Heart right ventricle (tissue), 16 donors: ENCODE measurements at regions of chr11 and their contacts with region 1.

Region 1: GRCh38 chr11:72430741-72431570 is 3.4 kb downstream of the CLPB start:
- DNase-seq: no peak
- ATAC-seq: peak in 4 of 8 donors; percentile 12 to 37 (median 33)
- H3K4me3 ChIP-seq: no peak overlapping the region
- H3K27ac ChIP-seq: no peak overlapping the region
- H3K4me1 ChIP-seq: peaks cover 0 to 41% (median 21%) of the 10 kb centered on the region in 9 donors
- H3K27me3 ChIP-seq: no peaks in the 10 kb centered on the region
- CTCF ChIP-seq: peak; percentile 39 to 83 (median 75)

Region 2: DNA sequence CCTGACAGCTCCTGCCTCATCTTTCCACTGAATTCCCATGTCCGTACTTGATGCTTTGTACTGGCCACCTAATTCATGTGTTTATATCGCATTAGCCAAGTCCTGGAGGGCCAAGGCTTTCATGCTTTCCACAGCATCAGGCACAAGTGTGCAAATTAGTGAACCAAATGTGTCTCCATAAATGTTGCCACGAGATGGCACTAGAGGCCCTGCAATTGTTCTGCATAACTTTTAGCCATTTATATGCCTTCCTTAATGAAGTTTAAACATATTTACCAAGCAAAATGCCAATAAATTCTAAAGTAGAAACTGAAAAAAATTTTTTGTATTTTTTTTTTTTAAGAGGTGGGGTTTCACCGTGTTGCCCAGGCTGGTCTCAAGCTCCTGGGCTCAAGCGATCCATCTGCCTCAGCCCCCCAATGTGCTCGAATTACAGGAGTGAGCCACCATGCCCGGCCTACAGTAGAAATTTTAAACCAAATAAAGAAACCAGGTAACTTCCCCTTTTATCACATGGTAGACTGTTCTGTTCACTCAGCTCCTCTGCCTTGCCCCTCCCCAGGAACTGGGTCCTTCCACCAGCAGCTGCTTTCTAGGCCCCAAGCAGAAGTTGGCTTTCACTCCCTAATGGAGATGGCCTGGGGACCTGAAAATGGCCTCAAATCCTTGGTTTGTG is 453.1 kb before region 1 on chr11:
- intact Hi-C with region 1: loop called in 4 of 10 experiments (anchors 5 to 10 kb)
- DNase-seq: peak in 1 of 2 donors; percentile 45
- ATAC-seq: peak in 6 of 8 donors; percentile 35 to 81 (median 68)
- H3K4me3 ChIP-seq: no peak overlapping the region
- H3K27ac ChIP-seq: peak overlapping the region in 1 of 10 donors; percentile 41
- H3K4me1 ChIP-seq: peaks cover 0 to 6% (median 0%) of the 10 kb centered on the region in 9 donors
- H3K27me3 ChIP-seq: no peaks in the 10 kb centered on the region
- CTCF ChIP-seq: peak; percentile 59 to 83 (median 74)

Region 3: GRCh38 chr11:72102946-72103753 is 327.8 kb before region 1 on chr11 and contains the start of gene LAMTOR1:
- intact Hi-C with region 1: loop called in 1 of 10 experiments (anchors 10 kb)
- DNase-seq: peak; percentile 99 to 100
- ATAC-seq: peak; percentile 97 to 99 (median 99)
- H3K4me3 ChIP-seq: peak within 1 kb of the TSS; percentile 59 to 99 (median 80)
- H3K27ac ChIP-seq: peak within 1 kb of the TSS; percentile 79 to 99 (median 96)
- H3K4me1 ChIP-seq: peaks cover 6 to 51% (median 38%) of the 10 kb centered on the region in 9 donors
- H3K27me3 ChIP-seq: no peaks in the 10 kb centered on the region
- CTCF ChIP-seq: peak; percentile 11 to 56 (median 39)
- total RNA-seq, gene LAMTOR1: 76.5 to 103 (median 81.8) TPM

Region 4: GRCh38 chr11:72141066-72141465 is 289.9 kb before region 1 on chr11:
- intact Hi-C with region 1: loop called in 1 of 10 experiments (anchors 5 kb)
- DNase-seq: no peak
- ATAC-seq: no peak
- H3K4me3 ChIP-seq: no peak overlapping the region
- H3K27ac ChIP-seq: no peak overlapping the region
- H3K4me1 ChIP-seq: peaks cover 0 to 12% (median 0%) of the 10 kb centered on the region in 9 donors
- H3K27me3 ChIP-seq: no peaks in the 10 kb centered on the region
- CTCF ChIP-seq: no peak

Region 5: DNA sequence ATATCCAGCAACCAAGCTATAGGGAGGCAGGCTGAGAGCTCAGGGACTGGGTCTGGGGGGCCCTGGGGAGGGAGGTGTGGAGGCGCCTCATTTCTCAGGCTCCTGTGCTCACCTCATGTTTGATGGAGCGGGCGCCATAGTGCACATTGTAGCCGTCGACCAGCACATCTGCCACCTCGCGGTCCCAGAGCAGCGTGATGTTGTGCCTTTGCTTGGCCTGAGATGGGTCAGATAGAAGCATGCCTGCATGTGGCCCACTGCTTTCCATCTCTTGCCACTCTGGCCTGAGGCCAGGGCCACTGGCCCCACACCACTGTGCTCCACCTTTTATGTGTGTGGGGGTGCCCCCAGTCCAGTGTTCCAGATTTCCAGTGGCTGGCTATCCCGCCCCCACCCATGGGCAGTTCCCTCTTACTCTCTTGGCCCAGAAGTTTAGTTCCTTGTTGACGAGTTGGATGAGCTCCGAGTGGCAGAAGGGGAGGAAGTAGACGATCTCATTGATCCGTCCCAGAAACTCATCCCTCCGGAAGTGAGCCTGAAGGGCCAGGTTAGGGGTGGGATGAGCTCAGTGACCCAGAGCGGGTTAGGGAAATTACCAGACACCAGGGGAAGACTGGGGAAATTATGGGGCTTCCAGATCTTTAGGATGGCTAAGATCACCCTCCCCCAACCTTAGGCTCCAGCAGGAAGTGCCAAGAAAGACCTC is 136.9 kb before region 1 on chr11:
- intact Hi-C with region 1: loop called in 1 of 10 experiments (anchors 5 kb)
- DNase-seq: no peak
- ATAC-seq: peak in 2 of 8 donors; percentile 21 to 39
- H3K4me3 ChIP-seq: no peak overlapping the region
- H3K27ac ChIP-seq: no peak overlapping the region
- H3K4me1 ChIP-seq: no peaks in the 10 kb centered on the region
- H3K27me3 ChIP-seq: no peaks in the 10 kb centered on the region
- CTCF ChIP-seq: no peak

Region 6: DNA sequence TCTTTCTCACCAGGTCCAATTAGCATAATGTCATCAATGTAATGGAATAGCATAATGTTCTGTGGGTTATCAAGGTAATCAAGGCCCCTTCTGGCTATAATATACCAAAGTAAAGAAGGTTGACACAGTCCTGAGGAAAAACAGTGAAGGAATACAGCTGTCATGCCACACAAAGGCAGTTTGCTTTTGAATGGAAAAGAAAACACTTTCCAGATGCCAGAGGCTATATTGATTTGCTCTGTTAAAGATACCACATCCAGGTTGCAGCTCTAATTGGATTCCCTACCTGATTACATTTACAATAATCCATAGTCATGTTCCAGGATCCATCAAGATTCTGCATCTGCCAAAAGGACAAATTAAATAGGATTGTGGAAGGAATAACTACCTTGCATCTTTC is 25.7 kb after region 1 on chr11:
- intact Hi-C with region 1: no loop called
- DNase-seq: no peak
- ATAC-seq: no peak
- H3K4me3 ChIP-seq: no peak overlapping the region
- H3K27ac ChIP-seq: no peak overlapping the region
- H3K4me1 ChIP-seq: no peaks in the 10 kb centered on the region
- H3K27me3 ChIP-seq: no peaks in the 10 kb centered on the region
- CTCF ChIP-seq: no peak